ENCODE measurements at regions of chr6 and their contacts with region 1.

Region 1: DNA sequence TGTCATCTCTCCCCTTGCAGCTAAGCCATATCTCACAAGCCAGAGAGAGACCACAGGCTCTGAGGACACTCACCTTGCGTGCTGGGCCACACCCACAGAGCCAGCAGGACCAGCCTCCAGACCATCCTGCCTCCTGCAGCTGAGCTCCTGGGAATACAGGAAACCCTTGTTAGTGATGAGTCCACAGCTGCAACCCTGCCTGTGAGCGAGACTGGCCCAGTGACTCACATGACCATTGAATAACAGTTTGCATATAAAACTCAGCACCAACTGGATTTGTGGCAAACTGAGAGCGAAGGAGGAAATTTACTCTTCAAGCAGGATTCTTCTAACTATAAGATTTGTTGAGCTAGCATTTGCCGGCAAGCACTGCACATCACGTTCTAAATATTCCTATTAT is 3.0 kb downstream of the THBS2 start:
- DNase-seq: peak; percentile 75
- H3K4me3 ChIP-seq: peak overlapping the region; percentile 77
- H3K27ac ChIP-seq: no peak overlapping the region
- H3K27me3 ChIP-seq: no peaks in the 10 kb centered on the region
- CTCF ChIP-seq: no peak

Region 2: DNA sequence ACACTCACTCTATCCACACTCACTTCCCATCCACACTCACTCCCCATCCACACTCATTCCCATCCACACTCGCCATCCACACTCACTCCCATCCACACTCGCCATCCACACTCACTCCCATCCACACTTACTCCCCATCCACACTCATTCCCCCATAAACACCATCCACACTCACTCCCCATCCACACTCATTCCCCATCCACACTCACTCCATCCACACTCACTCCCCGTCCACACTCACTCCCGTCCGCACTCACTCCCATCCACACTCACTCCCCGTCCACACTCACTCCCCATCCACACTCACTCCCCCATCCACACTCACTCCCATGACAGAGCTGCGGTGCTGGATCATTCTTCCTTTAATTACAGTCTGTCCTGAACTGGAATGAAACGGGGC is 14.1 kb before region 1 on chr6:
- CTCF ChIA-PET with region 1: no interaction called
- POLR2A ChIA-PET with region 1: no interaction called
- DNase-seq: no peak
- H3K4me3 ChIP-seq: no peak overlapping the region
- H3K27ac ChIP-seq: no peak overlapping the region
- H3K27me3 ChIP-seq: no peaks in the 10 kb centered on the region
- CTCF ChIP-seq: no peak

Region 3: GRCh38 chr6:169729961-169730360 is 479.3 kb after region 1 on chr6:
- CTCF ChIA-PET with region 1: interaction called, 18 read pairs
- POLR2A ChIA-PET with region 1: no interaction called
- DNase-seq: no peak
- H3K4me3 ChIP-seq: no peak overlapping the region
- H3K27ac ChIP-seq: no peak overlapping the region
- H3K27me3 ChIP-seq: no peaks in the 10 kb centered on the region
- CTCF ChIP-seq: no peak